Activated naive CD8-positive, alpha-beta T cell treated with anti-CD3 and anti-CD28 coated beads, Interleukin-2, amount 10 ng/mL, durations not matched to agents 7 days and 5 days (primary cell): ENCODE measurements at regions of chr16 and their contacts with region 1.

Region 1: DNA sequence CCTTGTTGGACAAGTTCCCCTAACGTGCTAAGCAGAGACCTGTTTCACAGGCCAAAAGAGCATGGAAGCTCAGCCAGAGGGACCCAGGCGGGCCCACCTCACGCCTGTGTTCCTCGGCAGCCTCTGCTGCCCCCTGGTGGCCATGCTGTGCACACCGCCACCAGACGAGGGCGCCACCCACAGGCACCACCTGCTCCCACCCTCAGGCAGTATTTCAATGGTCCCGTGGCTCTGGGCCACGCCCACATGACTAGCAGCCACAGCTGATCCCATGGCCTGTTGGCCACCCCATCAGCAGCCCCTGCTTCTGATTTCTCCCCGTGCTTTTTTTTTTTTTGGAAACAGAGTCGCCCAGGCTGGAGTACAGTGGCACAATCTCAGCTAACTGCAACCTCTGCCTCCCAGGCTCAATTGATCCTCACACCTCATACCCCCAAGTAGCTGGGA is 18.9 kb downstream of the MPG start:
- DNase-seq: peak; percentile 96
- ATAC-seq: peak; percentile 93
- H3K4me3 Mint-ChIP-seq: no peak overlapping the region
- H3K27ac Mint-ChIP-seq: peak overlapping the region; percentile 40
- H3K4me1 Mint-ChIP-seq: peaks cover 5% of the 10 kb centered on the region
- H3K27me3 Mint-ChIP-seq: no peaks in the 10 kb centered on the region

Region 2: DNA sequence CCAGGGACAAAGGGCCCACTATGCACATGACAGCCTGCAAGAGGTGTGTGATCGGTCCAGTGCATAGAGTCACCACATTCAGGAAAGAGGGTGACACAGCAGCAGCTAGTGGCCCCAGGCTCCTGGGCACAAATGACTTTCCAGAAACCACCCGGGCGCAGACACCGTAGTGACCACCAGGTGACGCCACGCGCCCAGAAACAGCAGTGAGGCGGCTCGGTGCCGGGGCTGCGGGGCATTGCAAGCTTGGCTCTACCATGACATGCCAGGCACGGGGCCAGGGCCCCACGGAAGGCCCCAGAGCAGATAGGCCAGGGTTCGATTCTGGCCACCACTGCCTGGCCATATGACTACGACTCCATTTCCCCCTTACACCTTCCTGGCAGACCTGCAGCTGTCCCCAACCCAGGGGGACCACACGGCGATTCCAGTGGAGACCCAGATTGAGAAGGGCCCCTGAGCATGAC is 31.3 kb before region 1 on chr16:
- POLR2A ChIA-PET with region 1: interaction called, 52 read pairs
- DNase-seq: peak; percentile 92
- ATAC-seq: peak; percentile 86
- H3K4me3 Mint-ChIP-seq: no peak overlapping the region
- H3K27ac Mint-ChIP-seq: no peak overlapping the region
- H3K4me1 Mint-ChIP-seq: no peaks in the 10 kb centered on the region
- H3K27me3 Mint-ChIP-seq: peaks cover 9% of the 10 kb centered on the region